Left colon (tissue), 2 donors: ENCODE measurements at regions of chr6 and their contacts with region 1.

Region 1: GRCh38 chr6:53725791-53726431 is 60.4 kb upstream of the KLHL31 start:
- DNase-seq: peak; percentile 51 to 81
- ATAC-seq: peak; percentile 81

Region 2: GRCh38 chr6:53171605-53172446 is 554.1 kb before region 1 on chr6:
- intact Hi-C with region 1: loop called in 1 of 2 experiments (anchors 5 kb)
- DNase-seq: peak; percentile 71 to 89
- ATAC-seq: peak; percentile 97

Region 3: GRCh38 chr6:53492860-53493634 is 232.9 kb before region 1 on chr6:
- intact Hi-C with region 1: loop called in 1 of 2 experiments (anchors 5 kb)
- DNase-seq: no peak
- ATAC-seq: peak; percentile 56

Region 4: GRCh38 chr6:53956068-53956711 is 230.3 kb after region 1 on chr6:
- intact Hi-C with region 1: loop called in 1 of 2 experiments (anchors 5 kb)
- DNase-seq: peak; percentile 65 to 86
- ATAC-seq: peak; percentile 100